ENCODE measurements at regions of chr16 and their contacts with region 1.

Region 1: GRCh38 chr16:65117811-65118448 is 3.9 kb downstream of the CDH11 start:
- DNase-seq: peak in 4 of 5 donors; percentile 61 to 72 (median 66)
- ATAC-seq: peak; percentile 63 to 67 (median 66)
- H3K4me3 ChIP-seq: peak overlapping the region in 2 of 12 donors; percentile 11 to 24
- H3K27ac ChIP-seq: peak overlapping the region in 2 of 12 donors; percentile 17 to 53
- H3K4me1 ChIP-seq: peaks cover 0 to 40% (median 5%) of the 10 kb centered on the region in 12 donors
- H3K27me3 ChIP-seq: peaks cover 0 to 25% (median 0%) of the 10 kb centered on the region in 9 donors
- CTCF ChIP-seq: peak; percentile 81 to 95 (median 90)
- POLR2A ChIP-seq: no peak

Region 2: DNA sequence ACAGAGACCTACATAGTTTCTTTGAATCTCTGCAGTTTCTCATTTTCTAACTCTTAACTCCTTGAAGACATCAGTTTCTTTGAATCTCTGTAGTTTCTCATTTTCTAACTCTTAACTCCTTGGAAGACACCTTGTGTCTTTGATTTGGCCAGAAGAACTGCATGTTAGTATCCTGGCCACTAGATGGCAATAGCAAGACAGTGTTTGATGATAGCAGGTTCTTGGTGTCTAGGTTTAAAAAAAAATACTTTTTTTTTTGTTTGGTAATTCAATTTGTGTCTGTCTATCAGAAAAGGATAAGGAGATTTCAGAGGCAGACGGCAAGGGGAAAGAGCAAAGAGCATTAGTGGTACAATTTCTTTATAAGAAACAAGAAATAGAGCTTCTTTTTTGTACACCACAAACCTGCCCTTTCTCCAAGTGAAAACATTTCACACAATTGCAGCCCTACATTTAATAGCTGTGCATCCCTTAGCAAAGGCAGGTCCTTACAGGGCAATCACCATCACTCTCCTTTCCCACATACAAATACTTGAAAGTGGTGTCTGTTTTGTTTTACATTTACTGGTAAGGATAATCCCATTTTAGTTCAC is 1756.8 kb before region 1 on chr16:
- intact Hi-C with region 1: loop called in 2 of 10 experiments (anchors 5 kb)
- DNase-seq: no peak
- ATAC-seq: peak in 1 of 4 donors; percentile 45
- H3K4me3 ChIP-seq: no peak overlapping the region
- H3K27ac ChIP-seq: no peak overlapping the region
- H3K4me1 ChIP-seq: no peaks in the 10 kb centered on the region
- H3K27me3 ChIP-seq: no peaks in the 10 kb centered on the region
- CTCF ChIP-seq: peak; percentile 61 to 81 (median 69)
- POLR2A ChIP-seq: no peak

Region 3: GRCh38 chr16:64089697-64090096 is 1028.2 kb before region 1 on chr16:
- intact Hi-C with region 1: loop called in 7 of 10 experiments (anchors 5 to 10 kb)
- DNase-seq: no peak
- ATAC-seq: peak in 3 of 4 donors; percentile 39 to 41 (median 39)
- H3K4me3 ChIP-seq: no peak overlapping the region
- H3K27ac ChIP-seq: no peak overlapping the region
- H3K4me1 ChIP-seq: no peaks in the 10 kb centered on the region
- H3K27me3 ChIP-seq: no peaks in the 10 kb centered on the region
- CTCF ChIP-seq: peak; percentile 25 to 71 (median 54)
- POLR2A ChIP-seq: no peak

Region 4: DNA sequence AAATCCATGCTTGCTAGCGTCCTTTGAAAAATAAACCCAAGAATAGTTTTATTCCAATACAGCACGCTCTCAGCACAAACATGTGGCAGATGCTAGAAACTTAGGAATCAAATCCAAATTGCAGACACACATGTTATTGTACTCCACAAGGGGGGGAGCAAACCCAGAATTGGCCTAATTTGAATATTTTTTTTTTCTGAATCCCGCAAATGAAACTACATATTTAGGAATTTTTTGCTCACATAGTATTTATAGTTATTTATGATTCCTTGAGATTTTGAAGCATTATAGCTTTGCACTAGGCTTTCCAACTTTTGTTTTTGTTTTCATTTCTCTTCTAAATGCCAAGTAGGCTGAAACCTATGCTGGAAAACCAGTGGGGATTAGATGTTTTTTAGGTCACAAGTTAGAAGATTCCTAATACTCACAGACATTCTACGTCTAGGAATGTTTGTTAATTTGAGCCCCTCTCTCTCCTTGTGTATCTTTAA is 63.2 kb after region 1 on chr16:
- intact Hi-C with region 1: loop called in 1 of 10 experiments (anchors 5 kb)
- DNase-seq: no peak
- ATAC-seq: no peak
- H3K4me3 ChIP-seq: no peak overlapping the region
- H3K27ac ChIP-seq: no peak overlapping the region
- H3K4me1 ChIP-seq: peaks cover 0 to 17% (median 0%) of the 10 kb centered on the region in 12 donors
- H3K27me3 ChIP-seq: no peaks in the 10 kb centered on the region
- CTCF ChIP-seq: peak in 1 of 12 donors; percentile 20
- POLR2A ChIP-seq: no peak

Region 5: GRCh38 chr16:65445313-65446260 is 327.7 kb after region 1 on chr16:
- intact Hi-C with region 1: no loop called
- DNase-seq: no peak
- ATAC-seq: no peak
- H3K4me3 ChIP-seq: no peak overlapping the region
- H3K27ac ChIP-seq: no peak overlapping the region
- H3K4me1 ChIP-seq: no peaks in the 10 kb centered on the region
- H3K27me3 ChIP-seq: no peaks in the 10 kb centered on the region
- CTCF ChIP-seq: no peak
- POLR2A ChIP-seq: no peak

Region 6: DNA sequence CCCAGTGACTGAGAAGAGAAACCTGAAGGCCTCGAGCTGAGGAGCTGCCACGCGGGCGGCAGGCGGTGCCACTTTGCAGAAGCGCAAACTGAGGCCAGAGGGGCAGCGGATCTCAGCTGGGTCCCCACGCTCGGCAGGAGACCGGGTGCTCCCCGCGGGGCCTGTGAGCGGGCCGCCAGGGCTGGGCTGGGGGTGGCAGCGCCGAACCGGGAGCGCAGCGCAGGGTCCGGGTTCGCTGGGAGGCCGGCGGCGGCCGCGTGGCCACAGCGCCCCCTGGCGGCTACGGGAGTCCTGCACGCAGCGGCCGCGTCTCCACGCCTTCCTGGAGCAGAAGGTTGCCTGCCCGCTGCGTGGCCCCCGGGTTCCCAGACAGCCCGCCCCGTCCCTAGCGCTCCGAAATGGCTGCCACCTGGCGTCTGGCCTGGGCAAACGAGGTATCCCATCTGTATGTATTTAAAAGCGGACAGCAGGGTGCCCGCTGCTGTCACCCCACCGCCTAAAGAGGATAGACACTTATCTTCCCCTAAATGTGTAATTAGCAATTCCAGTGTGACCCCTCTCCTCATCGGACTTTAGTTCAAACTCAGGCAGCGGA is 1152.5 kb after region 1 on chr16:
- intact Hi-C with region 1: loop called in 1 of 10 experiments (anchors 10 kb)
- DNase-seq: peak; percentile 66 to 90 (median 72)
- ATAC-seq: peak in 3 of 4 donors; percentile 56 to 82 (median 79)
- H3K4me3 ChIP-seq: peak overlapping the region in 10 of 12 donors; percentile 31 to 53 (median 41)
- H3K27ac ChIP-seq: peak overlapping the region in 8 of 12 donors; percentile 1 to 57 (median 48)
- H3K4me1 ChIP-seq: peaks cover 0 to 35% (median 14%) of the 10 kb centered on the region in 12 donors
- H3K27me3 ChIP-seq: peaks cover 0 to 6% (median 0%) of the 10 kb centered on the region in 9 donors
- CTCF ChIP-seq: peak; percentile 82 to 100 (median 98)
- POLR2A ChIP-seq: no peak

Measured in heart left ventricle (tissue), 16 donors.